AG04450 (cell line): ENCODE measurements at regions of chr2 and their contacts with region 1.

Region 1: GRCh38 chr2:46062637-46063412 is 234.4 kb upstream of the EPAS1 start:
- DNase-seq: peak; percentile 73
- H3K4me3 ChIP-seq: no peak overlapping the region
- H3K27ac ChIP-seq: no peak overlapping the region
- H3K27me3 ChIP-seq: no peaks in the 10 kb centered on the region
- CTCF ChIP-seq: peak; percentile 92

Region 2: DNA sequence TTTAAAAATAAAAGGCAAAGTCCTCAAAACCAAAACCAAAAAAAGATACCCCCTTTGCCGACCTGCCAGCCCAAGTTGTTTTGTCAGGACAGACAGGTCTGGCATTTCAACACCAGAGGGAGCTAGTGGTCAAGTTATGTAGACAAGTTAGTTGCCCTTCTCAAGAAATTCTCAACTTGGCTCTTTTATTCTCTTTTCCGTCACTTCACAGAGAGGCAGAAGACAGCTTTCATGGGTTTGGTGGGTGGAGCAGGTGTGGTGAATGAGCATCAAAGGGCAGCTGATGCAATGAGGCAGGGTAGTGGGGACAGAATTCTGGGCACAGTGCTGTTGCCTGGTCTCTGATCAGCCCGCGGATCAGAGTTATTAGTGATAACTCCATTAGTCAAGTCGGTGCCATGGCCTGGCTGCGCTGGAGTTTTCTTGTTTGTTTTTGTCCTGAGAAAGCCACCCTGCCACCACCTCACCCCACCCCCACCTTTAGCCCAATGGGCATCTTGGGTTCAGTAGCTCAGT is 69.3 kb before region 1 on chr2:
- CTCF ChIA-PET with region 1: interaction called, 13 read pairs
- POLR2A ChIA-PET with region 1: no interaction called
- DNase-seq: peak; percentile 78
- H3K4me3 ChIP-seq: no peak overlapping the region
- H3K27ac ChIP-seq: no peak overlapping the region
- H3K27me3 ChIP-seq: no peaks in the 10 kb centered on the region
- CTCF ChIP-seq: peak; percentile 86

Region 3: DNA sequence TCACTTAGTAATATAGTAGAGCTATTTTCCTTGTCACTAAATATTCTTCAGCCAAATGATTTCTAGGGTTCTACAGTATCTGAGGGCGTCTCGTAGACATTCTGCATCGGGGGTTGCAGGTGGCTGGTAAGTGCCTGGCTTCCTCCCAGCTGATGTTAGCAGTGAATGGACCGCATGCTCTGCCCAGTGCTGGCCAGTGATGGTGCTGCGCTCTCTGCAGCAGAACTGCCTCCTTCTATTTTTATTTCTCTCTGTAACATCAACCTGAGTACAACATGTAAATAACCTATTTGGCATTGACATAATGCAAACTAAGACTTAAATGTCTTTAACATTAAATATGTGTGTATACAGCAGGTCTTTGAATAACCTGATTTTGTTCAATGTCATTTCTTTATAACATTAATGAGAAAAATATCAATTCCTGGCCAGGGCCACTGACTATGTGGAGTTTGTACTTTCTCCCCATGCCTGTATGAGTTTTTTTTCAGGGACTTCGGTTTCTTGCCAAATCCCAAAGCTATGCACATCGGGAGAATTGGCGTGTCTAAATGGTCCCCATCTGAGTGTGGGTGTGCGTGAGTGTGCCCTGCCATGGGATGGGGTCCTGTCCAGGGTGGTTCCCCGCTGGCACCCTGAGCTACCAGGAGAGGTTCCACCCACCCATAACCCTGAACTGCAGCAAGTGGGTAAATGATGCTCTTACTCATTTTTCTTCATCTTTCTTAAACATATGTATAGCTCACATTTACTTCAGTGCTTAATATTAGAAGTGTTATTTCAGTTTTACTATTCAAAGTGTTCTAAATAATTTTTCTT is 43.8 kb before region 1 on chr2:
- CTCF ChIA-PET with region 1: interaction called, 11 read pairs
- POLR2A ChIA-PET with region 1: no interaction called
- DNase-seq: no peak
- H3K4me3 ChIP-seq: no peak overlapping the region
- H3K27ac ChIP-seq: no peak overlapping the region
- H3K27me3 ChIP-seq: no peaks in the 10 kb centered on the region
- CTCF ChIP-seq: no peak; the same call in 1 of the 2 replicates

Region 4: GRCh38 chr2:46082521-46083485 is 20.0 kb after region 1 on chr2:
- CTCF ChIA-PET with region 1: interaction called, 15 read pairs
- POLR2A ChIA-PET with region 1: interaction called, 3 read pairs
- DNase-seq: no peak
- H3K4me3 ChIP-seq: no peak overlapping the region
- H3K27ac ChIP-seq: peak overlapping the region; percentile 11
- H3K27me3 ChIP-seq: no peaks in the 10 kb centered on the region
- CTCF ChIP-seq: no peak

Region 5: DNA sequence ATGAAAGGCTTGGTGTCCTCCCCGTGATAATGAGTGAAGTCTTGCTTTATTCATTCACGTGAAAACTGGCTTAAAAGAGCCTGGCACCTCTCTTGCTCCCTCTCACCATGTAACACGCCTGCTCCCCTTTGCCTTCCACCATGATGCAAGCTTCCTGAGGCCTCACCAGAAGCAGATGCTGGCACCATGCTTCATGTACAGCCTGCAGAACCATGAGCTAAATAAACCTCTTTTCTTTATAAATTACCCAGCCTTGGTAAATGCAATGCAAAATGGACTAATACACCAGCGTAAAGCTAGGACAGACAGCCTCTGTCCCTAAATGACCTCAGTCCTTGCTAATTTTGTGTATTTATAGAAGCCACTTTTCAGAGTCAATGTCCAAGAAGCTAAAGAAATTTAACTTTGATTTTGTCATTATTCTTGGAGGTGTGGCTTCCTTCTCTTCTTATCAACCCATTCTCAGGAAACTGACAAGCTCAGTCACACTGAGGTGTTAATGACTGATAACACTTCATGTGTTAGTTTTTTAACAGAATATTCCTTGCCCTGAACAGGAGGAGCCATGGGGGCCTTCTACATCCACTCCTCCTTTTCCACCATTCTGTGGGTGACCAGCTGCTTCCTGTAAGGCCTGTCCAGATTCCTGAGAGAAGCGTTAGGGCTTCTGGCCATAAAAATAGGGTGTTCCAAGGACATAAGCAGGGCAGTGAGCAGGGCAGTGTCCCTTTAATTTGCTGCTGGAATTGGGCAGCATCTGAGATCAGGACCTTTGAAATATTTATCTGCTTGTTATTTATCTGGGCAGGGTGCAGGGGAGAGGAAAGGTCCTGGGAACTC is 196.3 kb after region 1 on chr2:
- CTCF ChIA-PET with region 1: interaction called, 10 read pairs
- POLR2A ChIA-PET with region 1: no interaction called
- DNase-seq: no peak
- H3K4me3 ChIP-seq: no peak overlapping the region
- H3K27ac ChIP-seq: no peak overlapping the region
- H3K27me3 ChIP-seq: peaks cover 4% of the 10 kb centered on the region
- CTCF ChIP-seq: no peak

Region 6: GRCh38 chr2:46309052-46309952 is 246.5 kb after region 1 on chr2:
- CTCF ChIA-PET with region 1: interaction called, 10 read pairs
- POLR2A ChIA-PET with region 1: no interaction called
- DNase-seq: no peak
- H3K4me3 ChIP-seq: no peak overlapping the region
- H3K27ac ChIP-seq: no peak overlapping the region
- H3K27me3 ChIP-seq: no peaks in the 10 kb centered on the region
- CTCF ChIP-seq: no peak